Adrenal gland (tissue), 19 donors: ENCODE measurements at regions of chr19 and their contacts with region 1.

Region 1: DNA sequence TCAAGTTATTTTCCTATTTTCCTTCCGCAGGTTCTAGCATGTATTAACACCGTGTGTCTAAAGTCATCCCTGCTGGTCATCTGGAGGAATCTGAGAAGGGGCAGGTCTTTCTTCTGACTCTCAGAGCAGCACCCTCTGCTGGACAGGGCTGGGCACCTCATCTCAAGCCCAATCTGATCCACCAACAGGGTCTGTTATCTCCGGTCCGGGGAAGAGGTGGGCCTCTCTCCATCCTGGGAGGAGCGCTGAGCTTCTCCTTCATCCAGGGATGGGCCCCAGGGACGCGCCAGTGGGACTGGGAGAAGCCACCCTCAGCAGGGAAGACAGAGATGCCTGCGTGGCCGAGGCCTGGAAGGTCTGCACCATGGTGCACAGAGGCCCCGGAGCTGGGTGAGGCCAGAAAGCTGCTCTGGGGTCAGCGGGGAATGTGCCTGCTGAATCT is 26.0 kb upstream of the ZNF331 start:
- DNase-seq: peak; percentile 36 to 82 (median 70)
- H3K4me3 ChIP-seq: no peak overlapping the region
- H3K27ac ChIP-seq: no peak overlapping the region
- H3K4me1 ChIP-seq: no peaks in the 10 kb centered on the region
- H3K27me3 ChIP-seq: no peaks in the 10 kb centered on the region
- CTCF ChIP-seq: peak; percentile 51 to 75 (median 62)
- POLR2A ChIP-seq: no peak

Region 2: GRCh38 chr19:53424968-53425597 is 86.9 kb before region 1 on chr19:
- intact Hi-C with region 1: loop called in 1 of 2 experiments (anchors 10 kb)
- DNase-seq: peak; percentile 76 to 94 (median 85)
- H3K4me3 ChIP-seq: no peak overlapping the region
- H3K27ac ChIP-seq: peak overlapping the region in 2 of 5 donors; percentile 13 to 81
- H3K4me1 ChIP-seq: peaks cover 0 to 5% of the 10 kb centered on the region in 2 donors
- H3K27me3 ChIP-seq: no peaks in the 10 kb centered on the region
- CTCF ChIP-seq: peak; percentile 65 to 86 (median 78)
- POLR2A ChIP-seq: no peak